AG04450 (cell line): ENCODE measurements at regions of chr5 and their contacts with region 1.

Region 1: DNA sequence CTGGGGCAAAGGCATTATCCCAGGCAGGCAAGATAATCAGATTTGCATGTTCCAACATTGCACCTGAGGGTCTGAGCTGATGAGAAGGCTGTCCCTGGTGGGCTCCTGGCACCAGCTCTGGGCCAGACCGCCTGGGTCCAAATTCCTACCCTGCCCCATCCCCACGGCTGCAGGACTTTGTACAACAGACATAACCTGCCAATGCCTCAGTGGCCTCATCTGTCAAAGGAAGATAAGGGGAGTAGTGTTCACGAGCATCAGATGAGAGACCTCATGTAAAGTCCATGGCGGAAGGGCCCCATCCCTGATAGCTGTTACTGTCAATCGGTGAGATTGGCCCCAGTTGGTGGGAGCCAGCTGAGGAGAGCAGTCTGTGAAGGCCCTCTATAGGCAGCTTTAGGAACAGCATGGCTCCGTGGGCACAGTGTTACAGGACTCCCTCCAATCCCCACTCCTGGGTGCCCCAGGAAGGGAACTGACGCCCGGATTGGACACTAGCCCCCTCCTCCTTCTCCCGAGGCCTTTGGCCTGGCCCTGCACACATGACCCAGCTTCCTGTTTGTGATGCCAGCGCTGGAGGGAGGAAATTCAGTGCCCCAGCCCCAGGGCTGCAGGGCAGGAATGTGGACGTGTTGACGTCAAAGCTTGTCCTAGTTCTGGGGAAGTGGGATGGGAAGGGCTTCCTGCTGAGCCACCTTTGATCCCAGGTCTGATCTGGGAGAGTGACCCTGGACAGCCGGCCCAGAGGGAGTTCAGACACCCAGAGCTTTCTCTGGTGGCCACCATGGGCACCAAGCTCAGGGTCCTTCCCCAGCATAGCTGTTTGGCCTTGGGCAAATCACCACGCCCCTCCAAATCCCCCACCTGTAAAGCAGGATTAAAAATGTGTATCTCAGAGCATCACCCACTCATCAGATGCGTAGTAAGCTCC is 56.2 kb downstream of the DUSP1 start:
- DNase-seq: no peak
- H3K4me3 ChIP-seq: no peak overlapping the region
- H3K27ac ChIP-seq: no peak overlapping the region
- H3K27me3 ChIP-seq: no peaks in the 10 kb centered on the region
- CTCF ChIP-seq: peak; percentile 92

Region 2: GRCh38 chr5:172659909-172660628 is 54.7 kb before region 1 on chr5:
- CTCF ChIA-PET with region 1: no interaction called
- POLR2A ChIA-PET with region 1: no interaction called
- DNase-seq: peak; percentile 72
- H3K4me3 ChIP-seq: peak overlapping the region; percentile 7; the same call in 1 of the 2 replicates
- H3K27ac ChIP-seq: peak overlapping the region; percentile 97
- H3K27me3 ChIP-seq: no peaks in the 10 kb centered on the region
- CTCF ChIP-seq: no peak

Region 3: DNA sequence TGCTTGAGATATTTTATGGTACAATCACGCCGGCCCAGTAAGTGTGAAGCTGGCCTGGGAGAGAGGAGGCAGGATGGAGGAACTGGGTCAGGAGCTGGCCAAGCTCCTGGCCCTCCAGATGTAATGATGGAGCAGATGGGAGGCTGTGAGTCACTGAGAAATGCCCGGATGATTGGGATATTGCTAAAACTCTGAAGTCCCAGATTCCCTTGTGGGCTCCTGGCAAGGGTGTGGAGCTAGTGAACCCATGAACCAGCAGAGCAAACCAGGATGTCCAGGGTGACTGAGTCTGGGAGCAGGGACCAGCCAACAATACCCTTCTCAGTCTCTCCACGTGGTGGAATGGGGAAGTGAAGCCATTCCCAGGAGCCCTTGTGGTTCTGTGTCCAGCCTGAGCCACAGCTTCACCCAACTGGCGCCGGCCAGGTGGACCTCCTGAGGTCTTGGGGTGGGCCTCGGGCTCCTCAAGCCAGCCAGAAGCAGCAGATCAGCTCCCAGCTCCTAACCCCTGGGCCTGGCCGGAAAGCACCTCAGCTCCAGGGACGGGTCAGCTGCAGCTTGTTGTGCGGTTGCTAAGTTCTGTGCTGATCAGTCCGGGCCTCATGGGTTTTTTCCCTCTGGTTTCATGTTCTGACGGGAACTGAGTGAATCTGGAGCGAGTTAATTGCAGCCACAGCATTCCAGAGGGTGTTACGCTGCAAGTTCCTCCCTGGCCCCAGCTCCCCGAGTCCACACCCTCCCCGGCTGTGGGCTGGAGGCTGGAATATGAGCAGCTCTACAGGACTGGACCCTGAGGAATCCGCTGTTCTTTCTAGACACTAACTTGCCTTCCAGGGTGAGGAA is 18.6 kb after region 1 on chr5:
- CTCF ChIA-PET with region 1: interaction called, 18 read pairs
- POLR2A ChIA-PET with region 1: no interaction called
- DNase-seq: peak; percentile 52
- H3K4me3 ChIP-seq: no peak overlapping the region
- H3K27ac ChIP-seq: peak overlapping the region; percentile 75
- H3K27me3 ChIP-seq: no peaks in the 10 kb centered on the region
- CTCF ChIP-seq: no peak

Region 4: DNA sequence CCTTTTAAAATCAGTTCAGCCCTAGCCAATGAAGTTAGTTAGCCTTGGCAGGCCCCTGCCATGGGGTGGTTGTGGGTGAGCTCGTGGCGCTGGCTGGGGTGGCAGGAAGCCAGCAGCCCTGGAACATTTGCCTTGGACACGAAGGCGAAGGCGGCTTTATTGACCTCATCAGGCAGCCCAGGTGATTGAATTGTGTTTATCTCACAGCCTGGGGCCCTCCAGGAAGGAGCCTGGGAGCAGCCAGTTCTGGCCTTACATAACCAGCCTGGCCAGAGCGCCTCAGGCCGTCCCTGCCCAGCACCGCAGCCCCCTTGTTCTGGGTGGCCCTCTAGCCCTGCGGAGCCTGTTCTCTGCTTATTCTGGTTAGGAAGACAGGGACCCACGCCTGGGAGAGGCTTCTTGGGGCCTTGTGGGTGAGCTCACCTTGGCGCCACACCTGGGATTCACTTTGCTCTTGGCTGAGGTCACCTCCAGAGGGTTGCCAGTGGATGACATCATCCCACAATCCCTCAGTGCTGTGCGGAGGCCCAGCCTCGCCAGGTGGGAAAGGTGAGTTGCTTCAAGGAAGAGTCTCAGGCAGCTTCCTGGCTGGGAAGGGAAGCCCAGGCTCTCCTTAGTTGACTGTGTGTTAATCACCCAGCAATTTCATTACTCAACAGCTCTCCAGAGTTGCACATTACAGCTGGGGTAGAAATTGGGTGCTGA is 190.0 kb after region 1 on chr5:
- CTCF ChIA-PET with region 1: interaction called, 12 read pairs
- POLR2A ChIA-PET with region 1: interaction called, 5 read pairs
- DNase-seq: no peak
- H3K4me3 ChIP-seq: no peak overlapping the region
- H3K27ac ChIP-seq: peak overlapping the region; percentile 99
- H3K27me3 ChIP-seq: no peaks in the 10 kb centered on the region
- CTCF ChIP-seq: no peak

Region 5: DNA sequence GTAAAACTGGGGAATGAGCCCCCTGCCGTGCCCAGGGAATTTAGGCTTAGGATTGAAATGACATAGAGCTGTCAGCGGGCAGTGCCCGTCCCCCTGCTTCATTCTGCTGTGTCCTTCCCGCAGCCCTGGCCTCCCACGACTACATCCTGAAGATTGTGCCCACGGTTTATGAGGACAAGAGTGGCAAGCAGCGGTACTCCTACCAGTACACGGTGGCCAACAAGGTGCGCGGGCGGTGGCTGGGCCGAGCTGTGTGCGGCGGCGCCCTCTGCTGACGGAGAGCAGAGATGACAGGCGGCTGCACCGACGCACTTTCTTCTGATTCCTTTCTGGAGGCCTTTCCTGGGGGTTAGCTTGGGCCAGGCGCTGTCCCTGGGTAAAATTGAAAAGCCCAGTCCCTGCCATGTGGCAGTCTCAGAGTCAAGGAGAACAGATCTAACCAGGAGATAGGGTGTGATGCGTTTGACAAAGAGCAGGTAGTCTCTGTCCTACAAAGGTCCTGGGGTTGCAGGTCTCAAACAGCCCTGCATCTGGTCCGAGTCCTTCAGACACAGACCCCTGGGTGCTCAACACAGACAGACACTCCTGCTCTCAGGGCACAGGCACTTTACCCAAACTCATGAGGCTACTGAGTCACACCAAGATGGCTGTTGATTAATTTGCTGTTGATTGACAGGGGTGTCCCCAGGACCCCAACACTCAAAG is 217.7 kb after region 1 on chr5:
- CTCF ChIA-PET with region 1: interaction called, 157 read pairs
- POLR2A ChIA-PET with region 1: interaction called, 5 read pairs
- DNase-seq: no peak
- H3K4me3 ChIP-seq: no peak overlapping the region
- H3K27ac ChIP-seq: peak overlapping the region; percentile 89
- H3K27me3 ChIP-seq: no peaks in the 10 kb centered on the region
- CTCF ChIP-seq: peak; percentile 96

Region 6: DNA sequence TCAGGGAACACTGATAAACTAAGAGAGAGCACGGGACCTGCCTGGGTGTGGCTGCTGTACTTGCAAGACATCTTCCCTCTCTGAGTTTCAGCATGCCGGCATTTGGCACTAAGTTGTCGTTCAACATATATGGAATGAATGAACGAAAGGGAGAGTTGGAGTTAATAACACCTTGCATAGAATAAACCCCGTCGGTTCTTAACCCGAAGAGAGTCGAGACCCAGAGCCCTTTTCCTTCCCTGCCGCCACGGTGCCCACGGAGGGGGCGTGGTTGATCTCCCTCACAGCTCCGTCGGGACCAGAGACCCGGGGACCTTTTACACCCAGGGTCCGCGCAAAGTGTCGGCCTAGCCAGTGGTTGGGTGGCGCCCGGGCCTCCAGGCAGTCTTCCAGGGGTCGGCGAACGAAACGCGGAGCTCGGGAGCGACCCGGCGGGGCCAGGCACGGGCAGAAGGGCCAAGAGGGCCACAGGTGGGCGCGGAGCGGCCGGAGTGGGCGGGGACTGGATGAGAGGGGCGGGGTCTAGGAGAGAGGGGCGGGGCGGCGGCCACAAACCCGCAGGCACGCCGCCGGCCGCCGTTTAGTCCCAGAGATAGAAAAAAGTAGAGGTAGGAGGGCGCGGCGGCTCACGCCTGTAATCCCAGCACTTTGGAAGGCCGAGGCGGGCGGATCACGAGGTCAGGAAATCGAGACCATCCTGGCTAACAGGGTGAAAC is 243.7 kb after region 1 on chr5:
- CTCF ChIA-PET with region 1: interaction called, 16 read pairs
- POLR2A ChIA-PET with region 1: interaction called, 3 read pairs
- DNase-seq: no peak
- H3K4me3 ChIP-seq: peak overlapping the region; percentile 56
- H3K27ac ChIP-seq: peak overlapping the region; percentile 86
- H3K27me3 ChIP-seq: no peaks in the 10 kb centered on the region
- CTCF ChIP-seq: no peak